SK-N-SH (cell line): ENCODE measurements at regions of chr4 and their contacts with region 1.

Region 1: DNA sequence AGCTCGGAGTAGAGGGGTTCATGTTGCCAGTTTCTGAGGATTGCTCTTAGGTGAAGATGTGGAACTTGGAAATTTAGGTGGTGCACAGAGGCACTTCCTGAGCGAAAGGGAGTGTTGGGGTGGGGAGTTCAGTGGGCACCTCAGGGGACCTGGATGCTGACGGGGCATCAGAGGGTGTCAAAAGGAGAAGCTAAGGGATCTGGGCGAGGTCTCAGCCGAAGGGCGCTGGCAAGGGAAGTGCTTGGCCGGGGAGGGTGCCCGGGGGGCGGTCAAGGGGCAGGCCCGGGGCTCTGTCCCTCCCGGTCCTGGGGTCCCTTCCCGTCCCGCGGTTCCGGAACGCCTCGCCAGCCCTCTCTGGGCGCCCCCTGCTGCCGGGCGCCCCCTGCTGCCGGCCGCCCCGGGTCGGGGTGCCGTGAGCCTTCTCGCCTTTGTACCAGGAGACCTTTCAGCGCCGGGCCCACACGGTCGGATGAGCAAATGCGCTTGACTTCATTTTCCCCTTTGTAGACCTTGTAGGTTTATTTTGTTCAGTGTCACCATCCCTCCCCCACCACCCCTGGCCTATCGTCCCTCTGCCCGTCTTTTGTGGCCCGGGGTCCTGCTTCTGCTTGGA is 3.0 kb upstream of the PHOX2B start:
- DNase-seq: peak; percentile 78
- H3K4me3 ChIP-seq: peak overlapping the region in 1 of 2 experiments; percentile 56; a peak in 1 of 4 replicates
- H3K27ac ChIP-seq: peak overlapping the region in 1 of 2 experiments; percentile 100; a peak in 2 of 4 replicates
- H3K4me1 ChIP-seq: peaks cover 0 to 34% of the 10 kb centered on the region in 2 experiments; a peak in 2 of 4 replicates
- H3K27me3 ChIP-seq: peaks cover 63% of the 10 kb centered on the region
- CTCF ChIP-seq: peak; percentile 36
- EP300 ChIP-seq: no peak
- RAD21 ChIP-seq: peak; percentile 32

Region 2: GRCh38 chr4:41185614-41186597 is 565.6 kb before region 1 on chr4:
- CTCF ChIA-PET with region 1: no interaction called
- POLR2A ChIA-PET with region 1: no interaction called
- DNase-seq: no peak
- H3K4me3 ChIP-seq: 0 out of 4 replicates have a peak overlapping the region, but pooled peaks of 1 of the 2 experiments have one; percentile 1
- H3K27ac ChIP-seq: peak overlapping the region; percentile 36 to 53
- H3K4me1 ChIP-seq: peaks cover 7 to 18% of the 10 kb centered on the region in 2 experiments; a peak in 3 of 4 replicates
- H3K27me3 ChIP-seq: no peaks in the 10 kb centered on the region
- CTCF ChIP-seq: no peak
- EP300 ChIP-seq: no peak
- RAD21 ChIP-seq: no peak

Region 3: GRCh38 chr4:41822325-41822724 is 70.8 kb after region 1 on chr4:
- CTCF ChIA-PET with region 1: interaction called, 21 read pairs
- POLR2A ChIA-PET with region 1: interaction called, 25 read pairs
- DNase-seq: peak; percentile 45
- H3K4me3 ChIP-seq: no peak overlapping the region
- H3K27ac ChIP-seq: peak overlapping the region in 1 of 2 experiments; percentile 98; a peak in 2 of 4 replicates
- H3K4me1 ChIP-seq: peaks cover 0 to 24% of the 10 kb centered on the region in 2 experiments; a peak in 2 of 4 replicates
- H3K27me3 ChIP-seq: no peaks in the 10 kb centered on the region
- CTCF ChIP-seq: no peak
- EP300 ChIP-seq: peak in 1 of 2 experiments; percentile 98; a peak in 2 of 4 replicates
- RAD21 ChIP-seq: peak; percentile 37

Region 4: GRCh38 chr4:41857226-41857641 is 105.7 kb after region 1 on chr4:
- CTCF ChIA-PET with region 1: interaction called, 34 read pairs
- POLR2A ChIA-PET with region 1: interaction called, 288 read pairs
- DNase-seq: peak; percentile 69
- H3K4me3 ChIP-seq: no peak overlapping the region
- H3K27ac ChIP-seq: peak overlapping the region in 1 of 2 experiments; percentile 100; a peak in 2 of 4 replicates
- H3K4me1 ChIP-seq: peaks cover 0 to 27% of the 10 kb centered on the region in 2 experiments; a peak in 2 of 4 replicates
- H3K27me3 ChIP-seq: peaks cover 14% of the 10 kb centered on the region; the same call in 1 of the 2 replicates
- CTCF ChIP-seq: no peak
- EP300 ChIP-seq: peak; percentile 4 to 98; a peak in 3 of 4 replicates
- RAD21 ChIP-seq: peak; percentile 32

Region 5: DNA sequence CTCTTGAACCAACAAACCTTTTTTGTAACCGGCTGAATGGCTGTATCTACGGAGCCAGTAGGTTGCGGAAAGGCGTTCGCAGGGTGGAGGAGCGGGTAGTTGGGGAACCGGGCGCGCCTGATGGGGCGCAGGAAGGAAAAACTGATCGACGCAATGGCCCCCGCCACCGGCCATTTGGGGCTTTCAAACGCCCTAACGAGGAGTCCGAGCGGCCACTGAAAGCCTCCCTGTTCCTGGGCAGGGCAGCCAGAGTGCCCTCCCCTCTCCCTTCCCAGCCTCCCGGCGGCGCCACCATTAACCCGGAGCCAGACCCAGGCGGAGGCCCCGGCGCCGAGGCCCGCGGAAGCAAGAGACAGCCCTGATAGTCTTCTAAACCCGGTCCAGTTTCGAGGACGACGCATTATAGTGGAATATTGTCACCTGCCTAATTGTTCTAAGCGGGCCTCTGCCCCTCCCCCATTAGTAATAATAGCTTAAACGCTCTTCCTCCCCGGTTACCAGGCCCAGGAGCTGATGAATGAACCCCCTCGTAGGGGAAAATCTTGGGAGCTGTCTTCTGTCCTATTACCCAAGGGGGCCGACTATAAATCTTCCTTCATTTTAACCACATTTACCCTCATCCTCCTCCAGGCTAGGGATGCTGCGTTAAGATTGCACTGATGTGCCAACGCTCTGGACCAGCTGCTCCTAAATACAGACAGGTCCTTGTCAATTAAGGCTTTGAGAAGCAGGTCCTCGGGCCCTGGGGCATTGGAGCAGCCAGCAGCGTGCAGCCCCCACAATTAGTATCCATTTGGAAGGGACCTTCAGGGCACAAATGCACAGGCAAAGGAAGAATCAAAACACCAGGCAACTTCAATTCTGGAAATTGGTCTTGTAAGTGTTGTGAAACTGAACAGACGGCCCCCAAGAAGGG is 122.1 kb after region 1 on chr4:
- CTCF ChIA-PET with region 1: interaction called, 35 read pairs
- POLR2A ChIA-PET with region 1: interaction called, 461 read pairs
- DNase-seq: peak; percentile 88
- H3K4me3 ChIP-seq: peak overlapping the region; percentile 3 to 36; a peak in 3 of 4 replicates
- H3K27ac ChIP-seq: peak overlapping the region in 1 of 2 experiments; percentile 99; a peak in 2 of 4 replicates
- H3K4me1 ChIP-seq: peaks cover 0 to 60% of the 10 kb centered on the region in 2 experiments; a peak in 2 of 4 replicates
- H3K27me3 ChIP-seq: peaks cover 29% of the 10 kb centered on the region
- CTCF ChIP-seq: no peak
- EP300 ChIP-seq: peak; percentile 55 to 99; a peak in 3 of 4 replicates
- RAD21 ChIP-seq: 0 out of 2 replicates have a peak, but pooled peaks have one; percentile 7

Region 6: DNA sequence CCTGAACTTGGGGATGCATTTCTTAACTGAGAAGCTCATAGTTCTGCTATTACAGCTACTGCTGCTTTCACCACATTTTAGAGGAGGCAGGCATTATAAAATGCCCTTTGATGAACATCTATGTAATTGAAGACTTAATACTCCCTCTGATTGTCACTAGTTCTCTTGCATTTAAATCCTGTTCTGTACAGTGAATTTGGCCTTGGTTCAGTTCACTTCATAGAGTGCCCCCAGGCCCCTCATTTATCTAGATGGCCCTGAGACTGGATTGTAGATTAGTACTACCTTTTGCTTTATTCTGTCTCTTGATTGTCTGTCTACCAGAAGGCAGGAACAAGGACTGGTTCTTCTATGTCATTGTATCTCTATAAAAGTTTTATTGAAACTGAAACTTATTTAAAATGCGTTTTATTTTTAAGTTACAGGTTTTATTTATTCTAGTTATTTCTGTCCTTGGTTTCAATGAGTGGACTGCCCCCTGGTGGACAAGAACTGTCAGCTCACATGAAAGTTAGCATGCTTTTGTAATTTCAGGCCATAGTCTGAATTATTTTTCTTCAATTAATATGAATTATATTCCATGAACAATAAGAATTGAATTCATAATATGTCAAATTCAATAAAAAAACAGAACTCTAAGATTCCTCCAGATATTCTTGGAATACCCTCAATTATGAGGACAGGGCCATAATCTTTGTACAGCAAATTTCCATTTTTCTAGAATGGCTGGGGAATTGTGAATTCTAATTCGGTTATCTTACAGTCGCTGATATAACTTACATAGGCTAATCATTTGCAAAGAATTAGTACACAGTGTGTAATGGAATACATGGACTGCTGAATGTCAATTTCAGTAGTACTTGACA is 136.5 kb after region 1 on chr4:
- CTCF ChIA-PET with region 1: interaction called, 29 read pairs
- POLR2A ChIA-PET with region 1: interaction called, 461 read pairs
- DNase-seq: no peak
- H3K4me3 ChIP-seq: no peak overlapping the region; a peak in 1 of 4 replicates
- H3K27ac ChIP-seq: peak overlapping the region in 1 of 2 experiments; percentile 99; a peak in 2 of 4 replicates
- H3K4me1 ChIP-seq: peaks cover 0 to 39% of the 10 kb centered on the region in 2 experiments; a peak in 2 of 4 replicates
- H3K27me3 ChIP-seq: peaks cover 10% of the 10 kb centered on the region; the same call in 1 of the 2 replicates
- CTCF ChIP-seq: peak; percentile 98
- EP300 ChIP-seq: peak in 1 of 2 experiments; percentile 64; a peak in 1 of 4 replicates
- RAD21 ChIP-seq: peak; percentile 82

Region 7: GRCh38 chr4:41927761-41928477 is 176.4 kb after region 1 on chr4:
- CTCF ChIA-PET with region 1: no interaction called
- POLR2A ChIA-PET with region 1: no interaction called
- DNase-seq: no peak
- H3K4me3 ChIP-seq: no peak overlapping the region
- H3K27ac ChIP-seq: no peak overlapping the region
- H3K4me1 ChIP-seq: no peaks in the 10 kb centered on the region
- H3K27me3 ChIP-seq: no peaks in the 10 kb centered on the region
- CTCF ChIP-seq: no peak
- EP300 ChIP-seq: no peak
- RAD21 ChIP-seq: no peak